Dendritic cell treated with granulocyte-macrophage colony-stimulating factor and Interleukin-4, amounts not matched to agents 40 ng/mL and 50 ng/mL, for 4 days (primary cell): ENCODE measurements at regions of chr5 and their contacts with region 1.

Region 1: DNA sequence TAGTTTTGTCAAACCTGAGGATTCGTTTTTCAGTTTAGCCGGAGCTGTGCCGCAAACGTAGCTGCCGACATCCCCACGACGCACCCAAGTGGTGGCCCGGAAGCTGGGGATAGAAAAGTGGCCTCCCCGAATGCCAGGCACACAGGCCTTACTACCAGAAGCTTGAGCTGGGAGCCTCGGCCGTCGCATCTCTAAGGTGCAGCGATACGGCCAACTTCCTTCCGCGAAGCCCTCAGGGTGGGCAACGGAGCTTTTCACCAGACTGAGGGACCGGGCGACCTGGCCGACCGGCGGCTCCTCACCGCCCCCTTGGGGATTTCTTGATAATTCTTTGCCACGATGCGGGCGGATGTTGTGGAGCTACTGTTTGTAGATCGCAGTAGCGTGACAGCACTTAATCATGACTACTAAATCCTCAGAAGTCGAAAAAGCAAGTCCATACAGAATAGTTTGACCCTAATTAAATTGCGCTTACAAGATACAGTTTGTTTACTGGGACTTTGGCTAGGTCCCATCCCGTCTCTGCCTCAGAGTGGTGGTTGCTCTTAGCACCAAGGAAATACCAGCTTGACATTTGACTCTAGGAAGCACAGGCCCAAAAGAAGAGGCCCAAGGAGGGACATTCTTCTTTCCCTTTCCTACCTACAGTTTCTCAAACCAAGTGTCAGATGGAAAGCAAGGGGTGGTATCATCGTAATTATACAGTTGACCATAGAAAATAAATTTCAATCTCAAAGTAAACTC is 613 bp upstream of the TMEM267 start:
- H3K4me3 Mint-ChIP-seq: peak overlapping the region; percentile 96
- H3K27ac Mint-ChIP-seq: peak overlapping the region; percentile 99
- H3K4me1 Mint-ChIP-seq: peaks cover 23% of the 10 kb centered on the region
- H3K27me3 Mint-ChIP-seq: no peaks in the 10 kb centered on the region

Region 2: DNA sequence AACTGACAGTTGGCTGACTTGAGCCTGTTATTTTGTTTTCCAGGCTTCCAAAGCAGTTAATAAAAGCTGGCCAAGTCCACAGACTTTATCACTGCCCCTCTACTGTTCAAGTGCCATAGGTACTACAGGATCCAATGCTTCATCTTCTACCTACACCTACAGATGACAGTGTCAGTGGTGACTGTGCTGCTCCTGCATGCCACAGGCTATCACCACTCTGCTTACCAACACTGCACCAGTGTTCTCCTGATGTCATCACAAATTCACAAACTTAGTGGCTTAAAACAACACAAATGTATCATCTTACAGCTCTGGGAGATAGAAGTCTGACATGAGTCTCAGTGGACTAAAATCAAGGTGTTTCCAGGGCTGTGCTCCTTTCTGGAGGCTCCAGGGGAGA is 197.7 kb before region 1 on chr5:
- intact Hi-C with region 1: no loop called
- H3K4me3 Mint-ChIP-seq: no peak overlapping the region
- H3K27ac Mint-ChIP-seq: no peak overlapping the region
- H3K4me1 Mint-ChIP-seq: no peaks in the 10 kb centered on the region
- H3K27me3 Mint-ChIP-seq: no peaks in the 10 kb centered on the region

Region 3: DNA sequence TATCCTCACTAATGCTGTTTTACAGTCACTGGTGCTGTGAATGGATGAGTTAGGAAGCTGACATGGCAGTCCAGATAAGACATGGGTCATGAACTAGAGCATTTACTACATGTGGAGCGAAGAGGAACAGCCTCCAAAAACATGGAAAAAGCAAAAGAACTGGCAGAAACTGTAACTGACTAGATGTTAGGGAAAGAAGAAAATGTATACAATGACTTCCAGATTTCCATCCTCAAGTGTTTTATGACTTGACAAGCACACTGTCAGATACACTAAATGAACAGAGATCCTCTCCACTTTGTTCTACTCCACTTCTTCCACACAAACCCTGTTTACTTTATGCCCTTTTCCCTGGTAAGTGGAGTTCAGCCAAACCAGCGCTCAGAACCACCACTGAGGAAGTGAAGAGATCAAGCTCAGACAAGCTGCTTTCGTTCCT is 182.6 kb before region 1 on chr5:
- intact Hi-C with region 1: no loop called
- H3K4me3 Mint-ChIP-seq: no peak overlapping the region
- H3K27ac Mint-ChIP-seq: no peak overlapping the region
- H3K4me1 Mint-ChIP-seq: peaks cover 38% of the 10 kb centered on the region
- H3K27me3 Mint-ChIP-seq: no peaks in the 10 kb centered on the region

Region 4: GRCh38 chr5:43313035-43313853 is 171.0 kb before region 1 on chr5 and contains the start of gene HMGCS1:
- intact Hi-C with region 1: loop called (anchors 1 kb)
- H3K4me3 Mint-ChIP-seq: peak within 1 kb of the TSS; percentile 98
- H3K27ac Mint-ChIP-seq: peak within 1 kb of the TSS; percentile 98
- H3K4me1 Mint-ChIP-seq: peaks cover 40% of the 10 kb centered on the region
- H3K27me3 Mint-ChIP-seq: peaks cover 5% of the 10 kb centered on the region

Region 5: GRCh38 chr5:43389679-43390329 is 94.5 kb before region 1 on chr5:
- intact Hi-C with region 1: loop called (anchors 5 kb)
- H3K4me3 Mint-ChIP-seq: no peak overlapping the region
- H3K27ac Mint-ChIP-seq: peak overlapping the region; percentile 4
- H3K4me1 Mint-ChIP-seq: peaks cover 18% of the 10 kb centered on the region
- H3K27me3 Mint-ChIP-seq: no peaks in the 10 kb centered on the region

Region 6: DNA sequence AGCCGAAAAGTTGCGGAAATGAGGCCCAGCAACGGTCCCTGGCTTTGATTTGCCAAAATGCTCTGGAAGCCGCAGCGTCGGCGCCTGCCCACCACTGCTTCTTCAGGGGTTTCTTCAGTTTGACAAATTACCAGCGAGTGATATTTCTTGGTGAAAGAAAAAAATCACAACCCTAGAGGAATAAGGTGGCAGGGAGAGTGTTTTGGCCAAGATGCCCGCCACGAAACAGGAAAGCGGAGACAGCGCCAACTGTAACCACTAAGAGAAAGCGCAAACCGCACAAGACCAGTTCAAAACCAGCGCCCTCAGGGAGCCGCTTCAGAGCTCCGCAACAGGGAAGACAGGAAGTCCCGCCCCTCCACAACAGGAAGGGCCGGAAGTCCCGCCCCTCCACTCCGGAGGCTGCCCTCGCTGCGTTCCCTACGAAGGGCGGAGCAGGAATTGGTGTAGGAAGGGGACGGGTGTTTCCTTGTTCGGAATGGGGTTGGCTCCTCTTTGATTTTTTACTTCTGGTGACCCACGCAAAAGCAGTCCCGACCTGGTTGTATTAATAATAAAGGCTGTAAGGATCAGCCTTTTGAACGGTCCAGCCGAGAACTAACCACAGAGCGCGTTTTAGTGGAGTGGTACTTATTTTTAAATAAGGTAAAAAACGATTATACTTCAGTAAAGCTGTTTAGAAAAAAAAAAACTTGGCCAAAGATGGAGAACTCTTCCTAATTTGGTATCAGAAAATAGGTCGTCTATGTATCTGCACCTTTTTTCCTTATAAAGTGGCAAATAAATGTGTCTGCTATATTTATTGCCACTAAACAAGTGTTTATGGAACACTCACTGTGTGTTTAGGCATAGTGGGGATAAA is 30.8 kb after region 1 on chr5 and contains the start of gene C5orf34:
- intact Hi-C with region 1: loop called (anchors 2 kb)
- H3K4me3 Mint-ChIP-seq: peak within 1 kb of the TSS; percentile 79
- H3K27ac Mint-ChIP-seq: peak within 1 kb of the TSS; percentile 88
- H3K4me1 Mint-ChIP-seq: peaks cover 24% of the 10 kb centered on the region
- H3K27me3 Mint-ChIP-seq: no peaks in the 10 kb centered on the region

Region 7: DNA sequence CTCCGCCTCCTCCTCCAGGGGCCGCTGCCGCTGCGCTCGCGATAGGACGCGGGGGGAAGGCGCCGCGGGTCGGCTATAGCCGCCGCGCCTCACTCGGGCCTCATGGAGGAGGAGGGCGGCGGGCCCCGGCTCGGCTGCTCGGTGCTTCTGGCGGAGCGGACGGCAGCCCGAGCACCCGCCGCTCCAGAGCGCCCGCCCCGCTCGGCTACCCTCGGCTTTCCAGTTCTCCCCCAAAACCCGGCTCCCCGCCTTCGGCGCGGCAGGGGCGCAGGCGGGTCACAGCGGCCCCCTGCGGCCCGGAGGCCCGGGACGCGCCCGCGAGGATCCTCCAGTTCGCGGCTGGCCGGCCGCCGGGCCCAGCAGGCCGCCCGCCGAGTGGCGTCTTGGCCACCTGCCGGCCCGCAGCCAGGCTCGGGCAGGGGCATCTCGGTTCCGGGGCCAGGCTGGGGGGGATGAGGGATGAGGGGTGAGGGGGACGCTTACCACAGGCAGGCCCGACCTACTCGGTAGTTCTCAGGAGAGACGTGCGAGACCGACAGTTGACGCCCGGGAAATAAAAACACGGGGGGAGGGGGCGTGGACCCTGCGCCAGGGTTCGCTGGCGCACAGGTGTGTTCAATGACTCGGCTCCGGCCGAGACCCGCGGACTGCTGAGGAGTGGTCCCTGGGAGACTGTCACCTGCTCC is 72.7 kb after region 1 on chr5 and contains the start of gene PAIP1:
- intact Hi-C with region 1: loop called (anchors 5 kb)
- H3K4me3 Mint-ChIP-seq: peak within 1 kb of the TSS; percentile 83
- H3K27ac Mint-ChIP-seq: peak within 1 kb of the TSS; percentile 75
- H3K4me1 Mint-ChIP-seq: peaks cover 7% of the 10 kb centered on the region
- H3K27me3 Mint-ChIP-seq: no peaks in the 10 kb centered on the region

Region 8: DNA sequence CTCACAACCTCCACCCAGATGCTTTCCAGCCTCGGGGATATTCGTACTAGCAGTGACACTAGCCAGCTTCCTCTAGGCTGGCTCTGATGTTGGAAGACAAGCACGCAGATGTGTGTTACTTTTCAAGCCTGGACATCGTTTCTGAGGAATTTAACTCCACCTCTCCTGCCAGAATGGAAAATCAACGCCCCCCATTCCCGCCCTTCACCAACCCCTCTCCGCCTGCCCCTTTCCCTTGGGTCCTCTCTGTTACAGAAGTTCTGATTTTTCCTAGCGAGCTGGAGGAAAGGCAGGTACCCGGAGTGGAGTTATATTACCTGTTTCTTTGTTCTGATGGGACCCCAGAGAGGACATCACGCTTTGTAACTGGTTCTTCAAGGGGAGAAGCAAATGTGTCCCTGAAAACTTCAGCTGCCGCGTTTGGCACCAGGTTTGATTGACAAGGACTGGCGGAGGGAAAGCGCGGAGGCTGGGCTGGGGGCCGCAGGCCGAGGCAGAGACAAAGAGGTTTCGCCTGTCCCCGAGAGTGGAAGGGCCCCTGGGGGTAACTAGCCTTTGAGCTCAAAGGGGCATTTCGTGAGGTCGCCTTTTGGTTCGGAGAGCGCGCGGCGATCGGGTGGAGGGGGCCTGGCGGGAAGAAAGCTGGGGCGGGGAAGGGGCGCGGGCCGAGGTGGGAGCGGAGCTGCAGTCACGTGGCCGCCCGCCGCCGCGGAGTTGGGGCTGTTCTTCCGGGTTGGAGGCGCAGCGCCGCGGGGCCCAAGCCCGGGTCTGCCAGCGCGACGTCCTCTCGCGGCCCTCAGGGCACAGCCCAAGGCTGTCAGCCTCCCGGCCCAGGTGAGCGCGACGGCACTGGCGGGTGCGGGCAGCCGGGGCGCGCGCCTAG is 118.4 kb after region 1 on chr5 and contains the start of gene NNT:
- intact Hi-C with region 1: loop called (anchors 2 kb)
- H3K4me3 Mint-ChIP-seq: peak within 1 kb of the TSS; percentile 86
- H3K27ac Mint-ChIP-seq: peak within 1 kb of the TSS; percentile 87
- H3K4me1 Mint-ChIP-seq: peaks cover 38% of the 10 kb centered on the region
- H3K27me3 Mint-ChIP-seq: no peaks in the 10 kb centered on the region